ENCODE measurements at regions of chr10 and their contacts with region 1.

Region 1: GRCh38 chr10:71835671-71836595 is 15.1 kb downstream of the PSAP start:
- DNase-seq: peak; percentile 72 to 89
- ATAC-seq: peak; percentile 51 to 67 (median 56)
- H3K4me3 ChIP-seq: peak overlapping the region; percentile 47
- H3K27ac ChIP-seq: peak overlapping the region; percentile 97
- H3K4me1 ChIP-seq: peaks cover 80% of the 10 kb centered on the region
- H3K27me3 ChIP-seq: no peaks in the 10 kb centered on the region
- CTCF ChIP-seq: no peak

Region 2: GRCh38 chr10:71822448-71822763 is 13.5 kb before region 1 on chr10:
- intact Hi-C with region 1: loop called in 1 of 2 experiments (anchors 1 kb)
- DNase-seq: no peak
- ATAC-seq: no peak
- H3K4me3 ChIP-seq: no peak overlapping the region
- H3K27ac ChIP-seq: no peak overlapping the region
- H3K4me1 ChIP-seq: peaks cover 22% of the 10 kb centered on the region
- H3K27me3 ChIP-seq: no peaks in the 10 kb centered on the region
- CTCF ChIP-seq: no peak

Region 3: DNA sequence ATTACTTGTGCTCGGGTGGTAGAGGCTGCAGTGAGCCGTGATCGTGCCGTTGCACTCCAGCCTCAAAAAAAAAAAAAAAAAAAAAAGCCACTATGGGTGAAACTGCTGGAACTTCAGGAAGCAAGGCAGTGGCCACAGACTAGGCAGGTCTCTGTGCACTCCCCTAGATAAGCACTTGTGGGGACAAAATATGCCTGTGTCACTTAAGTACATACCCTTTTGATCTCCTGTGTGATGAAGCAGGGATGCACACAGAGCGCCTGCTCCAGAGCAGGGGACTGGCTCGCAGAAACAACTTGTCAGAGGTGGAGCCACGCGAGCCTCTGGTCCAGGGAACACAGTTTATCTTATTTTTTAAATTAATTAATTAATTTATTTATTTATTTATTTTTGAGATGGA is 58.0 kb after region 1 on chr10:
- intact Hi-C with region 1: loop called (anchors 5 kb)
- DNase-seq: no peak
- ATAC-seq: no peak
- H3K4me3 ChIP-seq: no peak overlapping the region
- H3K27ac ChIP-seq: no peak overlapping the region
- H3K4me1 ChIP-seq: peaks cover 5% of the 10 kb centered on the region
- H3K27me3 ChIP-seq: no peaks in the 10 kb centered on the region
- CTCF ChIP-seq: no peak

Region 4: GRCh38 chr10:71899665-71900412 is 63.9 kb after region 1 on chr10:
- intact Hi-C with region 1: loop called in 1 of 2 experiments (anchors 5 kb)
- DNase-seq: no peak
- ATAC-seq: no peak
- H3K4me3 ChIP-seq: no peak overlapping the region
- H3K27ac ChIP-seq: no peak overlapping the region
- H3K4me1 ChIP-seq: no peaks in the 10 kb centered on the region
- H3K27me3 ChIP-seq: no peaks in the 10 kb centered on the region
- CTCF ChIP-seq: no peak

Measured in psoas muscle (tissue), 8 donors.